Tibial artery (tissue), 4 donors: ENCODE measurements at regions of chr12 and their contacts with region 1.

Region 1: DNA sequence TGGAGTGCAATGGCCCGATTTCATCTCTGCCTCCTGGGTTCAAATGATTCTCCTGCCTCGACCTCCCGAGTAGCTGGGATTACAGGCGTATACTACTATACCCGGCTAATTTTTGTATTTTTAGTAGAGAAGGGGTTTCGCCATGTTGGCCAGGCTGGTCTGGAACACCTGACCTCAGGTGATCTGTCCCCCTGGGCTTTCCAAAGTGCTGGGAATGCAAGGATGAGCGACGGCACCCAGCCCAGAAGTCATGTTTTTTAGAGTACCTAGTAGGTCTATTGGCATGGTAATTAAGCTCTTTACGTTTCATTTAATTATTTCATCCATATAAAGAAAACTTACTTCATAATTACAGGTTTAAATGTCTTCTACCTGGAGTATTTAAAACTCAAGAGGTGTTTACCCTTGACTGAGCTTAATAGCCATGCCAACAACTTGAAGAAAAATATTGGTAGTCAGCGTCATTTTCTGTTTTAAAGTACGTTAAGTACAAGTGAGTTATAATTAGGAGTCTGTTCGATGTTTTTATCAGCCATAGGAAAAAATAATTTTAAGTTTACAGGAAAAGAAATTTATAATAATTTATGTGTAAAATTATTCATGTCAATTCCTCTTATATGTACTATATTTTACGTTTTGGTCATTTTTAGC is 4.0 kb downstream of the TMPO start:
- DNase-seq: no peak
- H3K4me3 ChIP-seq: no peak overlapping the region
- H3K27ac ChIP-seq: no peak overlapping the region
- H3K4me1 ChIP-seq: peaks cover 0 to 25% (median 13%) of the 10 kb centered on the region in 4 donors
- H3K27me3 ChIP-seq: no peaks in the 10 kb centered on the region
- CTCF ChIP-seq: no peak

Region 2: GRCh38 chr12:98422809-98423208 is 96.6 kb before region 1 on chr12:
- intact Hi-C with region 1: loop called (anchors 2 kb)
- DNase-seq: no peak
- H3K4me3 ChIP-seq: no peak overlapping the region
- H3K27ac ChIP-seq: no peak overlapping the region
- H3K4me1 ChIP-seq: peaks cover 0 to 33% (median 23%) of the 10 kb centered on the region in 4 donors
- H3K27me3 ChIP-seq: no peaks in the 10 kb centered on the region
- CTCF ChIP-seq: no peak

Region 3: GRCh38 chr12:98439981-98440581 is 79.3 kb before region 1 on chr12:
- intact Hi-C with region 1: no loop called
- DNase-seq: peak; percentile 83 to 86
- H3K4me3 ChIP-seq: no peak overlapping the region
- H3K27ac ChIP-seq: peak overlapping the region in 1 of 2 donors; percentile 36
- H3K4me1 ChIP-seq: peaks cover 0 to 10% (median 5%) of the 10 kb centered on the region in 4 donors
- H3K27me3 ChIP-seq: no peaks in the 10 kb centered on the region
- CTCF ChIP-seq: no peak